Left colon (tissue), 2 donors: ENCODE measurements at regions of chr1 and their contacts with region 1.

Region 1: DNA sequence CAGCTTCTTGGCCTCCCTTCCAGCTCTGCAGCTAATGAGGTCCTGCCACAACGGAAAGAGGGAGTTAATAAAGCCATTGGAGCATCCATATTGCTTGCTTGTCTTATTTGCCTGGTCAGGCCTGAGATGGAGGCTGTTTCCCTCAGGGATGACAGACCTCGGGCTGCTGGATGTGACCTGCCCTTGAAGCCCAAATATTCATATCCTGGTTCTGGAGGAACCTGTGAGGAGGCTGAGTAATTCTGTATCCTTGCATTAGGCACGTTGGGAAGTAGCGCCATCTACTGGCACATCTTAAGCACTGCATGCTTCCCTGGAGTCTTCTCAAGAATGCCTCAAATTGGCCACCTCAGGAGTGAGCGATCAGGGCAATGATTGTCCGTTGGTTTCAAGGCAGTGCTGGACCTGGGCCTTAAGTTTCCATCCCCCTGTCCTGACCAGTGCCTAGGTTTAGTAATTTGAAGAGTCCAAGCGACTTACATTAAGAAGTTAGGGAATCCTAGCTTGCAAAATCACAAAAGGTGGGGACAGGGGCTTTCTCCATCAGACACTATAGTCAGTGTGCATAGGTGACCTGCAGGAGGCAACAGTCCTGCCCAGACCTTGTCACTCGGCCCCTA is 13.8 kb upstream of the NASP start:
- DNase-seq: peak; percentile 55 to 60
- ATAC-seq: peak; percentile 85

Region 2: GRCh38 chr1:45359882-45360513 is 210.1 kb before region 1 on chr1:
- intact Hi-C with region 1: loop called in 1 of 2 experiments (anchors 5 kb)
- DNase-seq: peak; percentile 48 to 76
- ATAC-seq: peak; percentile 64

Region 3: DNA sequence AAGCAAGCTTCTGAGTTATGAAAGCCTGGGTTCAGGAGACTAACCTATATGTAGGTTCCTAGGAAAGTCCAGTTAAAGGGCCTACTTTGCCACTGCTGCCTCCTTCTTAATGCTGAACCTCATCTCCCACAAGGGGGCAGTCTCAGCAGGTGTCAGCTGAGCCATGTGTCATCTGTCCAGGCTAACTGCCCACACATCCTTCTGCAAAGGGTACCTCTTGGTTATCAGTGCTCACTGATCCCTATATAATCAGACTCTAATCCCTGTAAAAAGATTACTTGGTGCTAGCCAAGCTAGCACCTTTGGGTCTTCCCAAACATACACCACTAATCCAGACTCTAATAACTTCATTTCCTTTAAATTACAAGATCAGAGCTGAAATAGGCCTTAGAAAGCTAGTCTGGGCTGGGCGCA is 57.4 kb before region 1 on chr1:
- intact Hi-C with region 1: loop called (anchors 5 to 10 kb)
- DNase-seq: peak; percentile 49 to 70
- ATAC-seq: peak; percentile 67